Activated B cell treated with CpG ODN at 0.5 μM for 24 hours (primary cell): ENCODE measurements at regions of chr12 and their contacts with region 1.

Region 1: GRCh38 chr12:62332598-62332997 is 72.4 kb downstream of the USP15 start:
- DNase-seq: no peak
- ATAC-seq: no peak
- H3K4me3 Mint-ChIP-seq: no peak overlapping the region
- H3K27ac Mint-ChIP-seq: no peak overlapping the region
- H3K4me1 Mint-ChIP-seq: peaks cover 27% of the 10 kb centered on the region
- H3K27me3 Mint-ChIP-seq: no peaks in the 10 kb centered on the region
- CTCF ChIP-seq: no peak

Region 2: DNA sequence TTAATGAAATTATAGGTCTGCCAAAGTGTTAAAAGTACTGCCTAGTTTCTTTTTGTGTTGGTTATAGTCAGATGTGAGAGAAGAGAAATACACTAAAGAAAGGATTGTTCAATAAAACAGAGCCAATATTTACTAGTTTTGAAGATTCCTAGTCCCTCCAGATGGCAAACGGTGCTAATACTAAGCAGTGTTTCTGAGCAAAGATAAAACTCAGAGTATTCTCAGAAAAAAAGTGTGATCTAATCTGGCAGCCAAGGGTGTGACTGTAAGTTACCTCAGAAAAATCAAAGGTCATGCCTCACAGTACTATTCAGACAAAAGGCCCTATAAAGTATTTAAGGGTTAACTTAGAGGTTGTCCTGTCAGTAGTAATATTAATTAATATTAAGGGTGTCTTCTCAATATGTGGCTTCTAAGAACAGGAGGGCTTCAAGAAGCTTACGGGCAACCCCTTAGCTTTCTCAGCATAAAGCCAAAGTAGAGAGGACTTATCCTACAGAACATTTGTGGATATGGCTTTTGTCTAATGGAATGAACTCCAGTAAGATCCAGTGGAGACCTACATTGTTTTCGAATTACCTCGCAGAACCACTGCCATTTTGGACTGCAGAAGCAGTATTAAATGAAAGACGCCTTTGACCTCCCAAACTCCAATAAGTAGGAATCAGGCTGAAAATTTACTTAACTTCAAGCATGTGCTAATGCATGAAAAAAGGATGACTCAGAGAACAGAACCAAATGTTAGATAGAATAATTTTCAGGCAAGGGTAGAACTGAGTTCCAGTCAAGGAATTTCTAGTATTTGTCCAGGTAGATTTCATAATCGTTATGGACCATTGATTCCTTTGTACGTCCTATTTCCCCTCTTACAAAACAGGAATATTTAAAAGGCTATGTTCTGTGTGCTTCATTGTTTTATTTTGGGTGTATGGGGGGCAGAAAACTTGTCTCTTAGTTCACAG is 25.7 kb before region 1 on chr12:
- CTCF ChIA-PET with region 1: no interaction called
- POLR2A ChIA-PET with region 1: no interaction called
- intact Hi-C with region 1: loop called (anchors 2 kb)
- DNase-seq: no peak
- ATAC-seq: no peak
- H3K4me3 Mint-ChIP-seq: no peak overlapping the region
- H3K27ac Mint-ChIP-seq: no peak overlapping the region
- H3K4me1 Mint-ChIP-seq: peaks cover 32% of the 10 kb centered on the region
- H3K27me3 Mint-ChIP-seq: no peaks in the 10 kb centered on the region
- CTCF ChIP-seq: no peak

Region 3: DNA sequence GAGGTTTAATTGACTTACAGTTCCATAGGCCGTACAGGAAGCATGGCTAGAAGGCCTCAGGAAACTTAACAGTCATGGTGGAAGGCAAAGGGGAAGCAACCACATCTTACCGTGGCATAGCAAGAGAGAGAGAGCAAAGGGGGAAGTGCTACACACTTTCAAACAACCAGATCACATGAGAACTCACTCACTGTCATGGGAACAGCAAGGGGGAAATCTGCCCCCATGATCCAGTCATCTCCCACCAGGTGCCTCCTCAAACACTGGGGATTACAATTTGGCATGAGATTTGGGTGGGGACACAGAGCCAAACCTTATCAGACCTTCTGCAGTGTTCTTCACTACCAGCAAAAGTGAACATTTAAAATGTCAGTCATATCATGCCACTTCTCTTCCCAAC is 13.5 kb before region 1 on chr12:
- CTCF ChIA-PET with region 1: no interaction called
- POLR2A ChIA-PET with region 1: no interaction called
- intact Hi-C with region 1: no loop called
- DNase-seq: no peak
- ATAC-seq: peak; percentile 45
- H3K4me3 Mint-ChIP-seq: no peak overlapping the region
- H3K27ac Mint-ChIP-seq: peak overlapping the region; percentile 21
- H3K4me1 Mint-ChIP-seq: peaks cover 27% of the 10 kb centered on the region
- H3K27me3 Mint-ChIP-seq: no peaks in the 10 kb centered on the region
- CTCF ChIP-seq: no peak

Region 4: GRCh38 chr12:62347922-62348650 is 15.5 kb after region 1 on chr12:
- CTCF ChIA-PET with region 1: no interaction called
- POLR2A ChIA-PET with region 1: no interaction called
- intact Hi-C with region 1: loop called (anchors 2 kb)
- DNase-seq: no peak
- ATAC-seq: no peak
- H3K4me3 Mint-ChIP-seq: no peak overlapping the region
- H3K27ac Mint-ChIP-seq: no peak overlapping the region
- H3K4me1 Mint-ChIP-seq: peaks cover 11% of the 10 kb centered on the region
- H3K27me3 Mint-ChIP-seq: no peaks in the 10 kb centered on the region
- CTCF ChIP-seq: no peak